ENCODE measurements at regions of chr17 and their contacts with region 1.

Region 1: DNA sequence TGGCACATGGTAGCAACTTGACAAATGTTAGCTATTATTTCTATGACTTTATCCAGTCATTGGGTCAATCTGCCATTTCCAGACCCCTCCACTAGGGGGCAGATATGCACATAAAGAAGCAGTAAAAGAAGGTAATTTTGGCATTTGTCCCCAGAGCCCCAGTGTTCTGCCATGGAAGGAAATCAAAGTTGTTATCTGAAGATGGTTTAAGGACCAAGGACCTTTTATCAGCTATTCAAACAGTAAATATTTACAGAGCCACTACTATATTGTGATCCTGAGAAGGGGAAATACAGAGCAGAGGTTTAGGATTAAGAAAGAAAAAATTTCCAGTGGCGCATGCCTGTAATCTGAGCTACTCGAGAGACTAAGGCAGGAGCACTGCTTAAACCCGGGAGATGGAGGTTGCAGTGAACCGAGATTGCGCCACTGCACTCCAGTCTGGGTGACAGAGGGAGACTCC is 20.0 kb downstream of the TRAF4 start:
- DNase-seq: peak; percentile 81
- H3K4me3 Mint-ChIP-seq: no peak overlapping the region
- H3K27ac Mint-ChIP-seq: no peak overlapping the region
- H3K4me1 Mint-ChIP-seq: peaks cover 9% of the 10 kb centered on the region
- H3K27me3 Mint-ChIP-seq: no peaks in the 10 kb centered on the region
- CTCF ChIP-seq: peak; percentile 72

Region 2: DNA sequence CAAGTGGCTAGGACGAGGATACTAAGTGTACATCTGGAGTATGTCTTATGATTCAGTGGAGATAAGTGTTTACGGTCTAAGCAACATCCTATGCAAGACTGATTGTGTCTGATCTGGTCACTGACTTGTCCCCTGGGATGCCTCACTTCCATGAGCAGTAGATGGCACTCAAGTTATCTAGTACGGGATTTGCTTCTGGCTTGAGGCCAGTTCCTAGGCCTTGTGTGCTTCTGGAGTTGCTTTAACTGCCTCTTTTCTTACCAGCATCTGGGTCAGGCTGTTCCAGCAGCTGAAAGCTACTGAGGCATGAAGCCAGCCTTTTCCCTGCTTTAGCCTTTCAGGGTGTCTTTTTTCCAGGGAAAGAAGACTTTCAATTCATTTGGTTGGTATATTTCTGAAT is 78.9 kb before region 1 on chr17:
- CTCF ChIA-PET with region 1: no interaction called
- intact Hi-C with region 1: no loop called
- DNase-seq: no peak
- H3K4me3 Mint-ChIP-seq: no peak overlapping the region
- H3K27ac Mint-ChIP-seq: no peak overlapping the region
- H3K4me1 Mint-ChIP-seq: no peaks in the 10 kb centered on the region
- H3K27me3 Mint-ChIP-seq: no peaks in the 10 kb centered on the region
- CTCF ChIP-seq: no peak

Region 3: GRCh38 chr17:28698253-28698941 is 65.4 kb before region 1 on chr17:
- CTCF ChIA-PET with region 1: no interaction called
- intact Hi-C with region 1: no loop called
- DNase-seq: peak; percentile 81
- H3K4me3 Mint-ChIP-seq: peak overlapping the region; percentile 26
- H3K27ac Mint-ChIP-seq: peak overlapping the region; percentile 72
- H3K4me1 Mint-ChIP-seq: peaks cover 18% of the 10 kb centered on the region
- H3K27me3 Mint-ChIP-seq: no peaks in the 10 kb centered on the region
- CTCF ChIP-seq: no peak

Region 4: GRCh38 chr17:28811651-28812090 is 47.8 kb after region 1 on chr17:
- CTCF ChIA-PET with region 1: interaction called, 8 read pairs
- intact Hi-C with region 1: loop called (anchors 2 kb)
- DNase-seq: peak; percentile 46
- H3K4me3 Mint-ChIP-seq: peak overlapping the region; percentile 85
- H3K27ac Mint-ChIP-seq: peak overlapping the region; percentile 85
- H3K4me1 Mint-ChIP-seq: peaks cover 28% of the 10 kb centered on the region
- H3K27me3 Mint-ChIP-seq: no peaks in the 10 kb centered on the region
- CTCF ChIP-seq: no peak

Region 5: GRCh38 chr17:28842282-28843012 is 78.6 kb after region 1 on chr17 and contains the start of gene FAM222B:
- CTCF ChIA-PET with region 1: interaction called, 11 read pairs
- intact Hi-C with region 1: no loop called
- DNase-seq: peak; percentile 91
- H3K4me3 Mint-ChIP-seq: peak within 1 kb of the TSS; percentile 99
- H3K27ac Mint-ChIP-seq: peak within 1 kb of the TSS; percentile 84
- H3K4me1 Mint-ChIP-seq: no peaks in the 10 kb centered on the region
- H3K27me3 Mint-ChIP-seq: no peaks in the 10 kb centered on the region
- CTCF ChIP-seq: no peak
- total RNA-seq, gene FAM222B: 37.7 and 42.1 TPM in 2 replicates

Region 6: DNA sequence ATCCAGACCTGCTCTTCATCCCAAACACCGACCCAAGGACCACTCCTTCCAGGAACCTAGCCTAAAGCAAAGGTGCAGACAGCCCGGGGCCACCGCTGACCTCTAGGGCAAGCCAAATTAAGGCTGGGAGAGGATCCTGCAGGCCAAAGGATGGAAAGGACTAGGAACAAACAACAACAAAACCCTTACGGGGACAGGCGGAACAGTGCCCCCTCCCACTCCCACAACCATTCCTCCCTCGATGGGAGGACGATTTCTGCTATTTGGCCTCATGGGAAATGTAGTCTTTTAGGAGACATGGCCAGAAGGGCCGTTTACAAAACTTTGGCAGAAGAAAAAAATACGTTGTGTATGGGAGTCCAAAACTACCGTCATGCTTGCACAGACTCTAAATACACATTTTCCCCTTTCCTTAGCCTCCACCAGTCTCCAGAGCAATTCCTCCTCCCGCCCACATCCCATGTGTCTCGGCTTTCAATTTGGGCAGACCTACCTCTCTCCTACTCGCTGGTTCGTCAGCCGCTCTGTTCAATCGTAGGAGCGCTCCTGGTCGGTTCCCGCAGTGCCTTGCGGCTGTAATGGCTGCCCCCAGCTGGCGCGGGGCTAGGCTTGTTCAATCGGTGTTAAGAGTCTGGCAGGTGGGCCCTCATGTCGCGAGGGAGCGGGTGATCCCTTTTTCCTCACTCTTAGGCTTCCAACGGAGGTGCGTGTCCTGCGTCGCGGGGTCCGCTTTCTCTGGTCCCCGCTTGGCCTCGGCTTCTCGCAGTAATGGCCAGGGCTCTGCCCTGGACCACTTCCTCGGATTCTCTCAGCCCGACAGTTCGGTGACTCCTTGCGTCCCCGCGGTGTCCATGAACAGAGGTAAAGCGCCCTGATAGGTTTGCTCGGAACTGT is 90.9 kb after region 1 on chr17 and contains the start of gene ERAL1:
- CTCF ChIA-PET with region 1: no interaction called
- intact Hi-C with region 1: loop called (anchors 5 kb)
- DNase-seq: peak; percentile 83
- H3K4me3 Mint-ChIP-seq: peak within 1 kb of the TSS; percentile 81
- H3K27ac Mint-ChIP-seq: peak within 1 kb of the TSS; percentile 60
- H3K4me1 Mint-ChIP-seq: no peaks in the 10 kb centered on the region
- H3K27me3 Mint-ChIP-seq: no peaks in the 10 kb centered on the region
- CTCF ChIP-seq: no peak
- total RNA-seq, gene ERAL1: 47.2 and 48.4 TPM in 2 replicates

Region 7: GRCh38 chr17:28878981-28879380 is 115.1 kb after region 1 on chr17:
- CTCF ChIA-PET with region 1: interaction called, 17 read pairs
- intact Hi-C with region 1: loop called (anchors 5 kb)
- DNase-seq: peak; percentile 65
- H3K4me3 Mint-ChIP-seq: no peak overlapping the region
- H3K27ac Mint-ChIP-seq: no peak overlapping the region
- H3K4me1 Mint-ChIP-seq: peaks cover 11% of the 10 kb centered on the region
- H3K27me3 Mint-ChIP-seq: no peaks in the 10 kb centered on the region
- CTCF ChIP-seq: peak; percentile 41

Region 8: DNA sequence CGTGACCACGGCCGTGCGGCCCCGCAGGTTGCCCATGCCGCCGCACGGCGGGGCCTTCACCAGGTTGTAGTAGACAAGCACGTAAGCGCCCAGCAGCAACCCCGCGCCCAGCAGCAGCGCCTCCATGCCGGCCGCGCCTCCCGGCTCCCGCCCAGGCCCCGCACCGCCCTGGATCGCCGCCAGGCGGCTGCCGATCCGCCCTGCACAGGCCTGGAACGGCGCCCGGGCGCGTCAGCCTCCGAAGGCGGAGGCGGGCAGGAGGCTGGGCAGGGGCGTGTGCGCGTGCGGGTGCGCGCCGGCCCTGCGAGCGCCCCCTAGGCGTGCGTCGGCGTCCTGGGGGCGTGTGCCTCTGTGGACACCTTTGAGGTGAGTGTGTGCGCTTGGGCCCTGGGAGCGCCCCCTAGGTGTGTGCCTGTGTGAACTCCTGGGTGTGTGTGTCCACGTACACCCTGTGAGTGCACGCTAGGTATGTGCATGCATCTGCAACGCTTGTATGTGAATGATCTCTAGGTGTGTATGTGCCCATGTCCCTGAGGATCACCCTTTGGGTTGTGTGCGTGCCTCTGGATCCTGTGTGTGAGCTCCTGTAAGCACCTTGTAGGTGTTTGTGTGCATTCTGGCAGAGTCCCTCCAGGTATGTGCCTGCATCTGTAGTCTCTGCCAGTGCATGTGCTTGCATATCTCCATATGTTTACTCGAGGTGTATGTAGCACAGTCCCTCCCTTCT is 139.1 kb after region 1 on chr17 and contains the start of gene DHRS13:
- CTCF ChIA-PET with region 1: interaction called, 7 read pairs
- intact Hi-C with region 1: loop called (anchors 5 kb)
- DNase-seq: peak; percentile 98
- H3K4me3 Mint-ChIP-seq: peak within 1 kb of the TSS; percentile 70
- H3K27ac Mint-ChIP-seq: peak within 1 kb of the TSS; percentile 1
- H3K4me1 Mint-ChIP-seq: peaks cover 21% of the 10 kb centered on the region
- H3K27me3 Mint-ChIP-seq: no peaks in the 10 kb centered on the region
- CTCF ChIP-seq: peak; percentile 97
- total RNA-seq, gene DHRS13: 19.2 and 23.2 TPM in 2 replicates

Measured in Calu3 (cell line).